ENCODE measurements at regions of chr19 and their contacts with region 1.

Region 1: DNA sequence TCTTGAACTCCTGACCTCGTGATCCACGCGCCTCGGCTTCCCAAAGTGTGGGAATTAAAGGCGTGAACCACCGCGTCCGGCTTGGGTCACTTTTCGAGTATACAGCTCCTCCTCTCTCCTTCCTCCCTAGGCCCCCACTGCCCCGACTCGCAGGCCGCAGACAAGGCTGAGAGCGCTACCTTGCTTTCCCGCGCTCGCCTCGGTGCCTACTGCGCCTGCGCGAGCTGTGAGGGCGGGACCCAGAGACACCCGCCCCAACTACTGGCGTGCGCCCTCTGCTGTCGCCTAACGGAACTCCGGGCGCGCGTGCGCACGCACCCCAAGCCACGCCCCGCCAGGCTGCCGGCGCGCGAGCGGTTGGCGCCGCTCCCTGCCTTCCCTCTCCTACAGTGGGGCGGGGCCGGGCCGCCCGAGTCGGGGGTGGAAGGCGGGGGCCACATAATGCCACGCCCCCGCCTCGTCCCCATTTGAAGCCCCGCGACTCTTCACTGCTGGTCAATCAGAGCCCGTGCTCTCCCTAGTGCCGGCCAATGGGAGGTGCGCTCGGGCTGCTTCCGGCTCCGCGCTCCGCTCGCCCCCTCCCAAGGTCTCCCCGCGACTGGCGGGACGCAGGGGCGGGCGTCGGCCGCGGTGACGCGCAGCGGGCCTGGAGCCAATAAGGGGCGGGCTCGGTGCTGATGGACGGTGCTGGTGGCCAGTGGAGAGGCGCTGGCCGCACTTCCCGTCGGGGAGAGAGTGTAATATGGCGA is at the start of gene RAB8A:
- DNase-seq: peak; percentile 99
- ATAC-seq: peak; percentile 97
- total RNA-seq, gene RAB8A: 16.8 TPM

Region 2: GRCh38 chr19:16076154-16076957 is 35.0 kb before region 1 on chr19 and contains the start of gene TPM4:
- intact Hi-C with region 1: loop called (anchors 5 kb)
- DNase-seq: peak; percentile 95
- ATAC-seq: peak; percentile 87
- total RNA-seq, gene TPM4: 74.7 TPM